ENCODE measurements at regions of chr12 and their contacts with region 1.

Region 1: GRCh38 chr12:51270067-51270970 is at the start of gene SMAGP:
- DNase-seq: peak; percentile 56
- ATAC-seq: peak; percentile 83
- H3K4me3 ChIP-seq: peak within 1 kb of the TSS; percentile 67 to 78 (median 69)
- H3K27ac ChIP-seq: peak within 1 kb of the TSS; percentile 70
- H3K4me1 ChIP-seq: peaks cover 25% of the 10 kb centered on the region
- H3K27me3 ChIP-seq: no peaks in the 10 kb centered on the region
- CTCF ChIP-seq: peak; percentile 45; the same call in 1 of the 2 replicates
- EP300 ChIP-seq: no peak
- POLR2A ChIP-seq: peak in 1 of 2 experiments; percentile 44; a peak in 2 of 4 replicates
- RAD21 ChIP-seq: no peak
- total RNA-seq, gene SMAGP: 9.2 and 9.4 TPM in 2 replicates

Region 2: GRCh38 chr12:51238510-51239334 is 31.6 kb before region 1 on chr12 and contains the start of gene DAZAP2:
- CTCF ChIA-PET with region 1: no interaction called
- POLR2A ChIA-PET with region 1: interaction called, 20 read pairs
- in situ Hi-C with region 1: no loop called
- intact Hi-C with region 1: no loop called
- DNase-seq: peak; percentile 88
- ATAC-seq: peak; percentile 97
- H3K4me3 ChIP-seq: peak within 1 kb of the TSS; percentile 99 to 100 (median 100)
- H3K27ac ChIP-seq: peak within 1 kb of the TSS; percentile 100
- H3K4me1 ChIP-seq: peaks cover 18% of the 10 kb centered on the region
- H3K27me3 ChIP-seq: no peaks in the 10 kb centered on the region; a peak in 1 of 5 replicates
- CTCF ChIP-seq: no peak
- EP300 ChIP-seq: no peak
- POLR2A ChIP-seq: peak; percentile 59 to 86
- RAD21 ChIP-seq: peak; percentile 37; the same call in 1 of the 2 replicates
- total RNA-seq, gene DAZAP2: 64.5 and 84.2 TPM in 2 replicates

Region 3: GRCh38 chr12:51254592-51254991 is 15.7 kb before region 1 on chr12:
- CTCF ChIA-PET with region 1: no interaction called
- POLR2A ChIA-PET with region 1: no interaction called
- in situ Hi-C with region 1: no loop called
- intact Hi-C with region 1: no loop called
- DNase-seq: no peak
- ATAC-seq: no peak
- H3K4me3 ChIP-seq: no peak overlapping the region
- H3K27ac ChIP-seq: no peak overlapping the region
- H3K4me1 ChIP-seq: peaks cover 6% of the 10 kb centered on the region; the same call in 1 of the 2 replicates
- H3K27me3 ChIP-seq: no peaks in the 10 kb centered on the region
- CTCF ChIP-seq: no peak
- EP300 ChIP-seq: no peak
- POLR2A ChIP-seq: no peak
- RAD21 ChIP-seq: no peak

Region 4: GRCh38 chr12:51341259-51342007 is 71.1 kb after region 1 on chr12:
- CTCF ChIA-PET with region 1: interaction called, 22 read pairs
- POLR2A ChIA-PET with region 1: interaction called, 17 read pairs
- in situ Hi-C with region 1: loop called (anchors 5 kb)
- intact Hi-C with region 1: loop called (anchors 1 kb)
- DNase-seq: peak; percentile 47
- ATAC-seq: peak; percentile 85
- H3K4me3 ChIP-seq: peak overlapping the region in 2 of 3 experiments; percentile 36 to 61; a peak in 4 of 6 replicates
- H3K27ac ChIP-seq: no peak overlapping the region
- H3K4me1 ChIP-seq: peaks cover 9% of the 10 kb centered on the region; the same call in 1 of the 2 replicates
- H3K27me3 ChIP-seq: no peaks in the 10 kb centered on the region
- CTCF ChIP-seq: peak; percentile 92
- EP300 ChIP-seq: no peak
- POLR2A ChIP-seq: no peak
- RAD21 ChIP-seq: peak; percentile 77

Region 5: GRCh38 chr12:51636581-51636980 is 366.3 kb after region 1 on chr12:
- CTCF ChIA-PET with region 1: no interaction called
- POLR2A ChIA-PET with region 1: no interaction called
- in situ Hi-C with region 1: no loop called
- intact Hi-C with region 1: no loop called
- DNase-seq: no peak
- ATAC-seq: no peak
- H3K4me3 ChIP-seq: no peak overlapping the region
- H3K27ac ChIP-seq: no peak overlapping the region
- H3K4me1 ChIP-seq: no peaks in the 10 kb centered on the region
- H3K27me3 ChIP-seq: no peaks in the 10 kb centered on the region
- CTCF ChIP-seq: no peak
- EP300 ChIP-seq: no peak
- POLR2A ChIP-seq: no peak
- RAD21 ChIP-seq: no peak

Measured in HepG2 (cell line).